Right ventricle myocardium inferior (tissue), 1 donor: ENCODE measurements at regions of chr13 and their contacts with region 1.

Region 1: DNA sequence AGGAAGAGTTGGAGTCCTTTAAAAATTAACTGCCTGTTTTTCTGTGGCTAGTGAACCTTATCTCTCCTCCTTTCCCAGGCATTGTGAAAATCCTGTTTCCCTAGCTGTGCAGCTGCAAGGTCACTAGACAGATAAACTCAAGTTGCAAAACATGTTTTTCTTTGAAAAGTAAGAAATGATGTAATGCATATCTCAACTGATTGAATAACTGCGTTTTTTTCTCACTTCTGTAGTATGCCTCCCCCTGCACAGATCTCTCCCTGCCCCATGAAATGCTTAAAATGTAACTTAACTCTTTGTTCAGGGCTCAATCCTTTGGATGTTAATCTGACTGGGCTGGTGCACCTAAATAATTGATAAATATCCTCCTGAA is 27.7 kb upstream of the CYSLTR2 start:
- DNase-seq: no peak
- ATAC-seq: peak; percentile 62

Region 2: DNA sequence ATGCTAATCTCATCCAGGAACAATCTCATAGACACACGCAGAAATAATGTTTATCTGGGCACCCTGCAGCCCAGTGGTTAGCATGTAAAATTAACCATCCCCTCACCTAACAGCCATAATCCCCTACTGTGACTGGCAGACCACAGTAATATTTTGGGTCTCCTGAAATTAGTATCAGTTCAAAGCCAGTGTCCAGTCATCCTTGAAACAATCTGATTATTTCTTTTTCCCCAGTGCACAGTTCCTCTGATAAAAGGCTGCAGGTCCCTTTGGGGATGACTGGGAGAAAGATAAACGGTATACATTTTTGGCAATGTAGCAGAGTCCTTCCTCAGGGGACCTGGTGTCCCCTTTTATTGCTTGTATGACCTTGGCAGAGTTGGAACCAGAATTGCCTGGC is 22.7 kb before region 1 on chr13:
- intact Hi-C with region 1: no loop called
- DNase-seq: no peak
- ATAC-seq: no peak

Region 3: DNA sequence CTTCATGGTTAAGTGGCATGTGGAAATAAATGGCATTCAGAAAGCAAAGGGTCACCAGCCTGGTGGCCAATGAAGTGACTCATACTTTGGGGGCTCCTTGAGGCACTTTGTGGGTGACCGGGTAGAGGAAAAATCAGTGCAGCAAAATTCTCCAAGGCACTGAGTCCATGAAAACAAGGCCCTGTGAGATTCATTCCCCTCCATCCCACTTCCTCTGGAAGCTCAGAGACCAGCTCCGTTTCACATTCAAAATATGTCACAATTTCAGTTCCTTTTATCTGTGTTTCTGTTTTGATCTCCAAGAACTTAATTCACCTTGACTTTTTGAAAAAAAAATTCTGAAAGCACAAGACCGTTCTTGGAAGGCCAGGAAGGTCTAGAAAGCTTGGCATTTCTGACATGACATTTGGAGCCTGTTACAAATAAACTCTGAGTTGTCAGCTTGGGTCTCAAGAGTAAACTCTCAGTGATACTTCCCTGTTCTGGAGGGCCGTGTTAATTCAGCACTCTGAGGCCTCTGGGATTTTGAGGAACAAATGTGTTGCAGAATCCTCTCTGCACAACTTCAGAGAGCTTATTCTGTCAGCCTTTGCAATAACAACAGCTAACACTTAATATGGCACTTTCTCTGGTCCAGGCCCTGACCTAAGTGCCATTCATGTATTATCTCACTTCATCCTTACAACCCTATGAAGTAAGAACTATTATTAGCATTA is 34.5 kb after region 1 on chr13:
- intact Hi-C with region 1: loop called (anchors 2 kb)
- DNase-seq: peak; percentile 23
- ATAC-seq: peak; percentile 96

Region 4: GRCh38 chr13:48731957-48732569 is 106.0 kb after region 1 on chr13:
- intact Hi-C with region 1: loop called (anchors 10 kb)
- DNase-seq: peak; percentile 80
- ATAC-seq: peak; percentile 44